HEK293 (cell line): ENCODE measurements at regions of chr17 and their contacts with region 1.

Region 1: DNA sequence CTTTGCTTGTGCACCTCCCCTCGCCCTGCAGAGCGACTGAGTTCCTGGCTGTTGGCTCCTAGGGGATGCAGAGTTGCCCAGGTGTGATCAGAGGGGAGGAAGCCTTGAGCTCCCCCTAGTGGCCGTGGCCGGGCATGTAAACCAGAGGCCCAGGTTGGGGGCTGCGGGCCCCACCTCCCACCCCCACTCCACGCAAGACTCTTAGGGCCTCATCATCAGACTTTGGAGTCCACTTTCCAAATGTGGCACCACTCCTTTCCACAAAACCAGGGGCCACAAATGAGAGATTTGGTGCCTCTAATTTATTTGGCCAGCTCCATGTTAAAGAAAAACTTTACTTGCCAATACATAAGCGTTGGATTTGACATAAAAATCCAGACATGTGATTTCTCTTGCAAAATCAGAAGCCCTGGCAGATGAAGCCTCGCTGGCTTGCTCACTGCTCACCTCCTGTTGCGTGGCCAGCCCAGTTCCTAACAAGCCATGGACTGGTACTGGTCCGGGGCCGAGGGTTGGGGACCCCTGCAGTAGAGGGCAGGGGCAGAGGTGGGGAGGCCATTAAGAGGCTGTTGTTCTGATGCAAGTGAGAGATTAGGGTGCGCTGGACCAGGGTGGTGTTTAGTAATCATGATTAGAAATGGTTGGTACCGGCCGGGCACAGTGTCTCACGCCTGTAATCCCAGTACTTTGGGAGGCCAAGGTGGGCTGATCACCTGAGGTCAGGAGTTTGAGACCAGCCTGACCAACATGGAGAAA is 28.7 kb upstream of the GAS7 start:
- H3K4me3 ChIP-seq: no peak overlapping the region
- H3K27ac ChIP-seq: no peak overlapping the region
- H3K4me1 ChIP-seq: no peaks in the 10 kb centered on the region
- CTCF ChIP-seq: peak; percentile 41; the same call in 1 of the 2 replicates

Region 2: GRCh38 chr17:9924735-9925191 is 302.3 kb before region 1 on chr17:
- CTCF ChIA-PET with region 1: interaction called, 13 read pairs
- POLR2A ChIA-PET with region 1: no interaction called
- H3K4me3 ChIP-seq: no peak overlapping the region
- H3K27ac ChIP-seq: no peak overlapping the region
- H3K4me1 ChIP-seq: peaks cover 6% of the 10 kb centered on the region; the same call in 1 of the 2 replicates
- CTCF ChIP-seq: peak; percentile 69

Region 3: DNA sequence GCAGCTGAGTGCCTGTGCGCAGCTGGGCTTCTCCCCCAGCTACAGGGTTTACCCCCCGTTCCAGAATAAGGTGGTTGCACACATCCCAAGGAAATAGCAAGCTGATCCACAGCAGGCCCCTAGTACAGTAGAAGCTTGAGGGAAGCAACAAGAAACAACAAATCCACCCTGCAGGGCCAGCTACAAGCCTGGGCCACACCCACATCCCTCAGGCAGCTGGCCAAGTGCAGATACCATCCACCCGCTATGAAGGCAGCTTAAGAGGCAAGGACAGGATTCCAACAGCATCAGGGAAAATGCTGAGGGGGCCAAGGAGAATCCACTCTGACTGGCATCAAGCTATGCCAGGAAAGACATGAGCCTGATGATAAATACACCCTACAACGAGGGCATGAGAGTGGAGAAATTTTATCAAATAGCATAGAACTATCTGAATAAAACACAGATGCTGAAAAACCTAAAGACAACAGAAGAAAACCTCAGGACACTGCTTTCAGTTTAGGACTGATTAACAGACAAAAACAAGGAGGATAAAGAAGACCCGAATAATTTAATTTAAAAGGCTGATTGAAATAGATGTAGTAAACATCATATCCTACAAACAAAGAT is 255.0 kb before region 1 on chr17:
- CTCF ChIA-PET with region 1: interaction called, 15 read pairs
- POLR2A ChIA-PET with region 1: no interaction called
- H3K4me3 ChIP-seq: no peak overlapping the region
- H3K27ac ChIP-seq: peak overlapping the region; percentile 60
- H3K4me1 ChIP-seq: peaks cover 25% of the 10 kb centered on the region
- CTCF ChIP-seq: no peak

Region 4: GRCh38 chr17:9982159-9982558 is 244.9 kb before region 1 on chr17:
- CTCF ChIA-PET with region 1: interaction called, 31 read pairs
- POLR2A ChIA-PET with region 1: no interaction called
- H3K4me3 ChIP-seq: no peak overlapping the region
- H3K27ac ChIP-seq: no peak overlapping the region
- H3K4me1 ChIP-seq: no peaks in the 10 kb centered on the region; the same call in 1 of the 2 replicates
- CTCF ChIP-seq: peak; percentile 50; the same call in 1 of the 2 replicates

Region 5: GRCh38 chr17:10208604-10209450 is 18.3 kb before region 1 on chr17:
- CTCF ChIA-PET with region 1: interaction called, 20 read pairs
- POLR2A ChIA-PET with region 1: no interaction called
- H3K4me3 ChIP-seq: no peak overlapping the region
- H3K27ac ChIP-seq: no peak overlapping the region
- H3K4me1 ChIP-seq: no peaks in the 10 kb centered on the region
- CTCF ChIP-seq: no peak

Region 6: DNA sequence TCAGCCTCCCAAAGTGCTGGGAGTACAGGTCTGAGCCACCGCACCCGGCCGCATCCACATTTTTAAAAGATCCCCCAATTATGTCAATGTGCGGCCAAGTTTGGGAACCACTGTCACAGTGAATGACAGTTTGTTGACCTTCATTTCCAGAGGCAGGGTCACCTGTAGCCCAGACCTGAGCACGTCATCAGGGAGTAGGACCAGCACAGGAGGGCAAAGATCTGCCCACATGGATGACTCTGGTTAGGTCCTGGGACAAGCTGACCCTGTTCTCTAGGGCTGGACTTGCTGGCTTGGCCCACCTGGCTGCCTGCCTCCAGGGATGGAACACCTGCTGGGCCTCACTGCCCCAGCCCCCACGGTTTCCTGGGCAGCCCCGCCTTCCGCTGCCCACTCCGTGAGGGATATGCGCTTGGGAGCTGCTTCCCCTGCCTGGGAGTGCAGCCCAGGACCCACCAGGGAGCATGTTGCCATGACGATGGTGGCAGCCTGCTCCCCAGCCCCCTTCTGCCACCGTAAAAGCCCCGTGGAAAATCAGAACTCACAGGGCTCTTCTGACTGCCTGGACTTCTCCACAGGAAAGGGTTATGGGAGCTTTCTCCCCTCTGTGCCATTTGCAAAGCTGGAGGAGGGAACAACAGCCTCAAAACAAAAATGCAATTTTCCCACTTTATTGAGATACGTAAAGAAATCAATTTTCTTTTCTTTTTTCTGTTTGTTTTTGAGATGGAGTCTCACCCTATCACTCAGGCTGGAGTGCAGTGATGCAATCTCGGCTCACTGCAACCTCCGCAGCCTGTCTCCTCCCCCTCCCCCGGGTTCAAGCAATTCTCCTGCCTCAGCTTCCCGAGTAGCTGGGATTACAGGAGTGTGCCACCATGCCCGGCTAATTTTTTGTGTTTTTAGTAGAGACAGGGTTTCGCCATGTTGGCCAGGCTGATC is 10.8 kb before region 1 on chr17:
- CTCF ChIA-PET with region 1: interaction called, 20 read pairs
- POLR2A ChIA-PET with region 1: no interaction called
- H3K4me3 ChIP-seq: no peak overlapping the region
- H3K27ac ChIP-seq: no peak overlapping the region
- H3K4me1 ChIP-seq: no peaks in the 10 kb centered on the region
- CTCF ChIP-seq: no peak

Region 7: DNA sequence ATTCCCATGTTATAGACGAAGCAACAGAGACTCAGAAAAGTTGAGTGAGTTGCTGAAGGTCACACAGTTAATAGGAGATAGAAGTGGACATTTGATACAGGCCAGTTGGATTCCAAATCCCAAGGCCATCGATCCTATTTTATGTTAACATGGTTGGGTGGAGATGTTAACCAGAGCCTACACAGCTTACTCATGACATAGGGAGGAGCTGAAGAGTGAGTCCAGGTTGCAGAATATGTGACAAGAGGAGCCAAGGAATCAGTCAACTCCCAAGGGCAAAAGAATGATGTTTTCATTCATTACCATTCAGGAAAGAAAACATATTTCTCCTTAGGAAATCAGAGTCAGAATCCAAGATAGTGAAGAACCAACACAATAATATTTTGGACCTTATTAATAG is 11.6 kb after region 1 on chr17:
- CTCF ChIA-PET with region 1: interaction called, 23 read pairs
- POLR2A ChIA-PET with region 1: no interaction called
- H3K4me3 ChIP-seq: no peak overlapping the region
- H3K27ac ChIP-seq: no peak overlapping the region
- H3K4me1 ChIP-seq: no peaks in the 10 kb centered on the region
- CTCF ChIP-seq: no peak